OCI-LY7 (cell line): ENCODE measurements at regions of chr2 and their contacts with region 1.

Region 1: DNA sequence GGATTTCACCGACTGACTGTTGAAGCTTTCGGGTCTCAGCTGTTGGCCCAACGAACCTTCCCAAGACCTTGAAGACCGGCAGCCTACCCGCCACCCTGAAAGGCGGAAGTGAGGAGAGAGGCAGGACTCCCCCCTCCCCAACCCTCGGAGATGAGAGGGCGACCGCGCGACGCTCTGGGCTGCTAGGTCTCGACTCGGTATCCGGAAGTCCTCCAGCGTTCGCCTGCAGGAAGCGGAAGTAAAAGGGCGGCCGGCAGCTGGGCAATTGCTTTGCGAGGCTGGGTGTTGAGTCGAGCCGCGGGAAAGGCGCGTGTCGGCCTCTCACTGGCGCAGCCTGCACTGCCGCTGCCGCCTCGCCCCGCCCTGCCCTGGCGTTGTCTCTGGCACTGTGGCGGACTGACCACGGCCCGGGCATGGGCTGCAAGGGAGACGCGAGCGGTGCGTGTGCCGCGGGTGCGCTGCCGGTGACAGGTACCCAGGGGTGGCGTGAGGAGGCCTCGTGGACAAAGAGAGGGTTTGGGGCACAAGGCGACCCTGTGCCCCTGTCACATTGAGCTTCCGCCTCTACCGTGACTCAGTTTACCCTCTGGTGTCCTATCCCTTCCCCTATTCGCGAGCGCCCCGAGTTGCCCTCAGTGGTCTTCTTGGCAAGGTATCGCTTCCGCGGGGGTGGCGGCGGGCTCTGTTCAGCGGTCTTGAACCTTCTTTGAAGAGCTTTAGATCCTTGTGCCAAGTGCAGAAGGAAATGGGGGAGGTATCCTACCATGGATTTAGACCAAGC is at the start of gene UGGT1:
- DNase-seq: peak; percentile 98
- H3K4me3 ChIP-seq: peak within 1 kb of the TSS; percentile 95
- H3K27ac ChIP-seq: peak within 1 kb of the TSS; percentile 67
- H3K4me1 ChIP-seq: peaks cover 34% of the 10 kb centered on the region
- CTCF ChIP-seq: no peak
- total RNA-seq, gene UGGT1: 33.2 and 39.7 TPM in 2 replicates

Region 2: DNA sequence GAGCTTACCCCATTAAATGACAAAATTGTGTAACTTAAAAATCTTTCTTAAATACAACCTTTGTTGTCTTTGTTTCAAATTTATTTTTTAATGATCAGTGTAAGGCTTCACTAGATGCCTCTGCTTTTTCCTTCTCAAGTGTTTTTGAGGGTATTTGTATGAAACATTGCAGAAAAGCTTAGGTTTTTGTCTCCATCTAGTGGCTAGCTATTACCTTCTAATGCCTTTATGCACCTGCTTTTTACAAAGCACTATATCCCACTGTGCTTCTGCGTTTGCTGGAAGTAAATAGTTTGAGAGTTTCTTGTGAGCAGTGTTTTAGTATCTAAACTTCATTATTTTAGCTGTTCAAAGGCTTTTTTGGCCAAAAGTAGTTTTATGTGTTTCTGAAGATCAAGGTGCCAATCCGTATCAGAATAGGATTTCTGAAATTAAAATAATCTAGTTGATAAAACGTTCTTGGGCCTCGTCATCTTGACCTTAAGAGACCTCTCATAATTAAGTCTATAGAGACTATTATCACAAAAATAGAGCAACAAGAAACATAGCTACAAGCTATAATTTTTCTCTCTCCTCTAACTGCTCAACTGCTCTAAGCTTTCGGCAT is 611.8 kb before region 1 on chr2:
- CTCF ChIA-PET with region 1: no interaction called
- POLR2A ChIA-PET with region 1: no interaction called
- intact Hi-C with region 1: no loop called
- DNase-seq: peak; percentile 71
- H3K4me3 ChIP-seq: no peak overlapping the region
- H3K27ac ChIP-seq: no peak overlapping the region
- H3K4me1 ChIP-seq: no peaks in the 10 kb centered on the region
- CTCF ChIP-seq: peak; percentile 95

Region 3: DNA sequence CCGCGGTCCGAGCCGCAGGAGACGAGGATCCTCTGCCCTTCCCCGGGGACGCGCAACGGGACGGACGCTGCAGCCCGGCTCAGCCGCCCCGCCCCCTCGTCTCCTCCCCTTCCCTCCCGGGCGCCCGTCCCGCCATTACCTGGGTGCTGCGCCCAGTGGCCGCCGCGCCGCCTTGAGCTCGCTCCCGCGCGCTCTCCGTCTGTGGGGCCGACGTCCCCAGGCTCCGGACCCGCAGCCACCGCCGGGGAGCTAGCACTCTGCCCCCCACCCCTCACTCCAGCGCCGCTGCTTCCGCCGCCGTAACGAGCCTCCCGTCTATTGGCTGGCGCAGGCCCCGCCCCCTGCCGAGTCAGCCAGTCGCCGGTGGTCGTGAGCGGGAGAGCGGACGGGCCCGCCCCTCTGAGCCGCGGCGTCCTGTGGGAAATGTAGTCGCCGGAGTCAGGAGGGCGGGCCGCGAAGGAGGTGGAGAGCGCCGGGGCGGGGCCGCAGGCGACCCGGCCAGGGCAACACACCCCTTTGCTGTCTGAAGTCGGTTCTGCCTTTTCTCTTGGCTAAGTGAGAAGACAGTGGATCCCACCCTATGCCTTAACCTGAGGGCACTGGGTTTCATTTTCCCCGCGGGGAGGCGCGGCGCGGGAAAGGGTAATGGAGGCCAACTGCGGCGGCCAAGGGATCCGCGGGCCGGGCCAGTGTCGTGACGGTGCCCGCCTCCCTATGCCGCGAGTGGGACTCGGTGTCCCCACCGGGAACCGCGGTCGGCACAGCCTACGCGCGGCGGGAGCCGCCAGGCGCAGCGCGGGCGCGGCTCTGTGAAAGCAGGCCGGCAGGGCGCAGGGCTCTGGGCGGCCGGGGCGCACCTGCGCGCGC is 63.1 kb before region 1 on chr2 and contains the start of gene SAP130:
- CTCF ChIA-PET with region 1: no interaction called
- POLR2A ChIA-PET with region 1: interaction called, 14 read pairs
- intact Hi-C with region 1: loop called (anchors 2 kb)
- DNase-seq: peak; percentile 97
- H3K4me3 ChIP-seq: peak within 1 kb of the TSS; percentile 93
- H3K27ac ChIP-seq: peak within 1 kb of the TSS; percentile 70
- H3K4me1 ChIP-seq: peaks cover 11% of the 10 kb centered on the region
- CTCF ChIP-seq: 0 out of 2 replicates have a peak, but pooled peaks have one; percentile 21
- total RNA-seq, gene SAP130: 6.7 and 9.6 TPM in 2 replicates

Region 4: GRCh38 chr2:128076461-128077106 is 14.6 kb before region 1 on chr2:
- CTCF ChIA-PET with region 1: no interaction called
- POLR2A ChIA-PET with region 1: interaction called, 10 read pairs
- intact Hi-C with region 1: no loop called
- DNase-seq: no peak
- H3K4me3 ChIP-seq: no peak overlapping the region
- H3K27ac ChIP-seq: no peak overlapping the region
- H3K4me1 ChIP-seq: peaks cover 7% of the 10 kb centered on the region
- CTCF ChIP-seq: no peak

Region 5: DNA sequence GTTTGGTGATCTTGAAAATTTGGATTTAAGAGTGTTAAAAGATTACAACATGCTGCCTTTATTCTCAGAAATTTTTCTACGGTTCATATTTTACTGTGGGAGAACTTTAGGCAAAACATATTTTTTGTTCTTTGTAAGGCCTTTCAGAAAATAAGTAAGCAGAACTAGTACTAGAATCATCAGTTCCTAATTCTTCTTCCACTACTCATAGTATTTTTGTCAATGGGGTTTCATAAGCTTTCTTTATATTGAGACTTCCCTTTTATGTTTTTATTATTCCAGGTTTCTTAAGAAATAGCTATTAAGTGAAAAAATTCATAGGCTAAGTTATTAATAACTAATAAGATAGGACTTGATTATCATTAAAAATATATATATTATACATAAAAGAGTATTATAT is 12.3 kb after region 1 on chr2:
- CTCF ChIA-PET with region 1: no interaction called
- POLR2A ChIA-PET with region 1: interaction called, 44 read pairs
- intact Hi-C with region 1: no loop called
- DNase-seq: no peak
- H3K4me3 ChIP-seq: no peak overlapping the region
- H3K27ac ChIP-seq: no peak overlapping the region
- H3K4me1 ChIP-seq: no peaks in the 10 kb centered on the region
- CTCF ChIP-seq: no peak